ENCODE measurements at regions of chrX and their contacts with region 1.

Region 1: DNA sequence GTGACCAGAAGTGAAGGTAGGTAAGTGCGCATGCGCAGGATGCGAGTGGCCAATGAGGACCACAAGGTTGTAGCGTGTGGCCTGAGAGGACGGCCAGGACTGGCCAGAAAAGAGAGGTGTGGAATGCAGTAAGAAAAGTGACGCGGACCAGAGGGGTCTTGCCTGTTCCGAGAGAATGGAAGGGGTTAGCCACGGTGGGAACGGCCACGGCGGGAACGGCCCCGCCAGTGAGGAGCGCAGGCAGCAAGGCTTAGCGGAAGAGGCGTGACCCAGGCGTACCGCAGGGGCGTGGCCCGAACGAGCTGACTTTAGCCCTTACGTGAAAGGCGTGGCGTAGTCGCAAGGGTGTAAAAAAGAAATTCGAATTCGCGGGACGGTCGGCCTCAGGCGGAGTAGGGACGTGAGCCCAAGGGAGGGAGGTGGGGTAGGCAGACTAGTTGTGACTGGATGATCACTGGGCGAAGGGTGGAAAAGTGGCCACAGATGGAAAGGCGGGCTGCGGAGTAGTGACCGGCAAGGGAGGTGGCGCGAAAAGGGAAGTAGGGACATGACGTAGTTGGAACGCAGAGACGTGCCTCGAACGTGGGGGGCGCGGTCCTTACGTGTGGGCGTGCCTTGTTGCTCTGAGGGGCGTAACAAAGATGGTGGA is 10.4 kb upstream of the CLTRN start:
- DNase-seq: peak; percentile 75
- ATAC-seq: peak; percentile 83
- H3K4me3 Mint-ChIP-seq: no peak overlapping the region
- H3K27ac Mint-ChIP-seq: no peak overlapping the region
- H3K4me1 Mint-ChIP-seq: peaks cover 13% of the 10 kb centered on the region
- H3K27me3 Mint-ChIP-seq: no peaks in the 10 kb centered on the region
- CTCF ChIP-seq: no peak

Region 2: DNA sequence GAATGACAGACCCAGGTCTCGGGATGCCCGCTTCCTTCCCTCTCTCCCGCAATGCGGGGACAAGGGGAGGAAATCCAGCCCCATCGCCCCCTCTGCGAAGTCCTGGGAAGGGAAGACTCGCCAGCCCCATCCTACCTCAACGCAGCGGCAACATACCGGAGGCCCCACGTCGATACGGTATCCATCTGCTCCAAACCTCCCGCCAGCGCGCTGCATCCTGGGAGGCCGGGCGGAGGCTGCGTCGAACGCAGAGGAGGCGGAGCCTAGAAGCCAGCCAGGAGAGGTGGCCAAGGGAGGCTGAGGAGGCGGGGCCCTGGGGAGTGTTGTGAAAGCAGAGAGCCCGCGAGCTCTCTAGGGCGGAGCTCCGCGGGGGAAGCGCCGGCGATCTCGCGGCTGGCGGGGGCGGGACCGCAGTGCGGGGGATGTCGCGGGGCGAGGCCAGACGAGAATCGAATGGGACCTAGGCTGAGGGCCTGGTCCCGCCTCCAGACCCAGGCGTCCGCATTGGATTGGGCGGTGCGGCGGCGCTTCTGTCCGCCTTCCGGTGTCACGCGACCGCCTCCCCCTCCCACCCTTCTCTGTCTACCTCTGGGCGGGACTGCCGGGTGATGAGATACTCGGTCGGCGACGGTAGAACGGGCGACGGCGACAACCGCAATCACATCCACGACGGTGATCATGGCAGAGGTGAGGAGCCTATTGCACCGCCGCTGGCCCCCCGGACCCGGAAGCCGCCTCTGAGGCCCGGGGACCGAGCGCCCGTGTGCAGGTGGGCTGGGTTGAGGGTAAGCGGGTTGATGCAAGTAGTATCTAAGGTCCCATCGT is 801.9 kb before region 1 on chrX and contains the starts of genes FANCB and MOSPD2:
- CTCF ChIA-PET with region 1: no interaction called
- POLR2A ChIA-PET with region 1: no interaction called
- intact Hi-C with region 1: loop called (anchors 2 kb)
- DNase-seq: peak; percentile 82
- ATAC-seq: peak; percentile 93
- H3K4me3 Mint-ChIP-seq: peak within 1 kb of the TSS; percentile 87
- H3K27ac Mint-ChIP-seq: peak within 1 kb of the TSS; percentile 83
- H3K4me1 Mint-ChIP-seq: peaks cover 7% of the 10 kb centered on the region
- H3K27me3 Mint-ChIP-seq: no peaks in the 10 kb centered on the region
- CTCF ChIP-seq: no peak
- total RNA-seq, gene FANCB: 3.9 and 4.0 TPM in 2 replicates
- total RNA-seq, gene MOSPD2: 15.6 and 19.7 TPM in 2 replicates

Region 3: GRCh38 chrX:15493118-15493962 is 181.6 kb before region 1 on chrX and contains the start of gene PIR:
- CTCF ChIA-PET with region 1: no interaction called
- POLR2A ChIA-PET with region 1: no interaction called
- intact Hi-C with region 1: loop called (anchors 10 kb)
- DNase-seq: peak; percentile 19
- ATAC-seq: peak; percentile 84
- H3K4me3 Mint-ChIP-seq: peak within 1 kb of the TSS; percentile 83
- H3K27ac Mint-ChIP-seq: peak within 1 kb of the TSS; percentile 25
- H3K4me1 Mint-ChIP-seq: peaks cover 8% of the 10 kb centered on the region
- H3K27me3 Mint-ChIP-seq: peaks cover 5% of the 10 kb centered on the region
- CTCF ChIP-seq: no peak
- total RNA-seq, gene PIR: 0.82 and 1.7 TPM in 2 replicates

Region 4: GRCh38 chrX:15645258-15645657 is 29.7 kb before region 1 on chrX:
- CTCF ChIA-PET with region 1: no interaction called
- POLR2A ChIA-PET with region 1: no interaction called
- intact Hi-C with region 1: no loop called
- DNase-seq: no peak
- ATAC-seq: no peak
- H3K4me3 Mint-ChIP-seq: no peak overlapping the region
- H3K27ac Mint-ChIP-seq: no peak overlapping the region
- H3K4me1 Mint-ChIP-seq: no peaks in the 10 kb centered on the region
- H3K27me3 Mint-ChIP-seq: no peaks in the 10 kb centered on the region
- CTCF ChIP-seq: no peak

Region 5: DNA sequence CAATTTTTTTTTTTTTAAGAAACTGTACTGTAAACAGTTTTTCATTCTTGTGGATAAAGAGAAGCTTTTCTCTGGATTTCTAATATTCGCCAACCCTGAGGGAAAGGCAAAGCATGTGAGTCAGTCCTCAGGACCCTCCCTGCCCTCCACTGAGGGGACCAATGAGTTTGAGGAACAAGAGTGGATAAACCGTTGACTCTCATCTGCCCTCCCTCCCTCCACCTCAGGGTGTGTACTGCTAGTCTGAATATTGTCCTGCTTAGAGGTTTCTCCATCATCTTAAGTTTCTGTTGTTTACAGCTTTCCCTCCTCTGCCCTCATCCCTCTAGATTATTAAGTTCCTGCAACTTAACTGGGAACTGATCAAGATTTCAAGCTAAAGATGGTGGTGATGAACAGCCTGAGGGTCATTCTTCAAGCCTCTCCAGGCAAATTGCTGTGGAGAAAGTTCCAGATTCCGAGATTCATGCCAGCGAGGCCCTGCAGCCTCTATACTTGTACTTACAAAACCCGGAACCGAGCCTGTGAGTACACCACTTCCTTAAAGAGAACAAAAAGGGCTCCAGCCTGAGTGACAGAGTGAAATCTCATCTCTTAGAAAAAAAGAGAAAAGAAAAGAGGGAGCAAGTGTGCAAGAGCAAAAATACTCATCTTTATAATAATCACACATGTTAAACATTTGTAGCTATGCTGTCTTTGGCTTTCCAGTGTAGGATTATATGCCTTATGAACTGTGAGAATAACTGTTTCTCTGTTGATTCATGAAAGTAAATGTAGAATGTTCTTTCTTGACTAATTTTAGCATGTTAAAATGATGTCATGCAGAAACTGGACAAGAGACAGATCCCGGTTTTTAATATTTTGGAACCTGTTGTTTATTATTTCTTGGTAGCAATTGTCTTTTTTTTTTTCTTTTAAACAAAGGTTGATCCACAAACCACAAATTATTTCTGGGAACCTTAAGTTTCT is 75.0 kb after region 1 on chrX:
- CTCF ChIA-PET with region 1: no interaction called
- POLR2A ChIA-PET with region 1: interaction called, 9 read pairs
- intact Hi-C with region 1: loop called (anchors 1 kb)
- DNase-seq: no peak
- ATAC-seq: peak; percentile 78
- H3K4me3 Mint-ChIP-seq: peak overlapping the region; percentile 58
- H3K27ac Mint-ChIP-seq: peak overlapping the region; percentile 98
- H3K4me1 Mint-ChIP-seq: peaks cover 58% of the 10 kb centered on the region
- H3K27me3 Mint-ChIP-seq: no peaks in the 10 kb centered on the region
- CTCF ChIP-seq: no peak

Region 6: DNA sequence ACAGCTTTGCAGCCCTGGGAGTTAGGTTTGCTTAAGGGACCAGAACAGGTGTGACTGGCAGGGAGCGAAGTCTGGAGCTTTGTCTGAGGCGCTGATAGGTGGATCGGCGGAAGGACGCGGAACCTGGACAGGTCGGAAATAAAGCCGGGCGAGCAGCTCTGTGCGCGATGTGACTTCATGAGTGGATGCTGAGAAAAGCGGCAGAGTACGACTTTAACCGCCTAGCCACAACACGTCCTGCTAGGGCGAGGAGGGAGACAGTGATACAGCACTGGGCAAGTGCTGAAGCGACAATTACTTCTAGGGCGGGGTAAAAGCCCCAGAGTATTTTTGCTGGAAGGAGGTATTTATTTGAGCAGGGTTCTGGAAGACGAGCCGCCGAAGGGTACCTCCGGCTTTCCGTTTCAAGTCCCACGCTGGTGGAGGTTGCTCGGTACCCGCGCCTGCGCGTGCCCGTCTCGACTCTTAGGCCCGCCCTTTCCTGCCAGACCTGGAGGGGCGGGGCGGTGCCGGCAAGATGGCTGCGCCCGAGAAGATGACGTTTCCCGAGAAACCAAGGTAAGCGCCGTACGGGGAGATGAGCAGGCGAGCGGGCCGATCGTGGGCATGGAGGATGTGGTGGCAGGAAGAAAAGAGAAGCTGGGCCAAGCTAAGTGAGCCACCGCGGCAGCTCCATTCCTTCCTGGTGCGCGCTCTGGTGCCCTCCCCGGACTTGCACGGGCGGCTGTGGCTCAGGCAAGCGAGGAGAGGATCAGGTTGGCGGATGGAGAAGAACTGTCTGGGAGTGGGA is 115.2 kb after region 1 on chrX and contains the start of gene ZRSR2:
- CTCF ChIA-PET with region 1: interaction called, 3 read pairs
- POLR2A ChIA-PET with region 1: interaction called, 6 read pairs
- intact Hi-C with region 1: loop called (anchors 1 kb)
- DNase-seq: peak; percentile 76
- ATAC-seq: peak; percentile 93
- H3K4me3 Mint-ChIP-seq: no peak within 1 kb of the TSS
- H3K27ac Mint-ChIP-seq: peak within 1 kb of the TSS; percentile 35
- H3K4me1 Mint-ChIP-seq: peaks cover 18% of the 10 kb centered on the region
- H3K27me3 Mint-ChIP-seq: no peaks in the 10 kb centered on the region
- CTCF ChIP-seq: no peak
- total RNA-seq, gene ZRSR2: 19.8 and 20.9 TPM in 2 replicates

Region 7: DNA sequence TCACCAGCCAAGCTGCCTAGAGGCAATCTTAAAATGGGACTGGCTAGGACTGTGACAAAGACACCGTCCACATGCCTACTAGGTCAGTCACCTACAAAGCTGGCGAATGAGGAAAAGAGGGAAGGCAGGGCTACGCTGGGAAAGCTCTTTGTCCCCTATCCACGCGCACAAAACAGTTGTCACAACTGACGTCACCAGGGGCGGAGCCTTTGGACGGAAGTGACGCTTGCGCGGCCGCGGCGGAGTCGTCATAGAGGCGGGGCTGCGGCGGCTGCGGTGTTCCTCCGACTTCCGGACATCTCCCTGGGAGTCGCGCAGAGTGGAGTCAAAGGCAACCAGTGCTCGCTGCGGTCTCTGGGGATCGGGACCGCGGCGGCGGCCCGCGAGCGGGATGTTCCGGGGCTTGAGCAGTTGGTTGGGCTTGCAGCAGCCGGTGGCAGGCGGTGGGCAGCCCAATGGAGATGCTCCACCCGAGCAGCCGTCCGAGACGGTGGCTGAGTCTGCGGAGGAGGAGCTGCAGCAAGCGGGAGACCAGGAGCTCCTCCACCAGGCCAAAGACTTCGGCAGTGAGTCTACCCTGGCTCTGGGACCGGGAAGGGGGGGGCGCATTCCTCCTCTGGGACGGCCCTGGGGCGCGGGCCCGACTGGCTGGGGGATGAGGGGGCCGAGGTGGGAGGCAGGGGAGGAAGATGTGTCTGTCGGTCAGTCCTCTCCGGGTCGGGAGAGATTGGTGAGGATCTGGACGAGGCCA is 1044.5 kb after region 1 on chrX and contains the start of gene SYAP1:
- CTCF ChIA-PET with region 1: no interaction called
- POLR2A ChIA-PET with region 1: interaction called, 6 read pairs
- intact Hi-C with region 1: loop called (anchors 2 kb)
- DNase-seq: peak; percentile 87
- ATAC-seq: peak; percentile 93
- H3K4me3 Mint-ChIP-seq: peak within 1 kb of the TSS; percentile 90
- H3K27ac Mint-ChIP-seq: peak within 1 kb of the TSS; percentile 94
- H3K4me1 Mint-ChIP-seq: peaks cover 15% of the 10 kb centered on the region
- H3K27me3 Mint-ChIP-seq: no peaks in the 10 kb centered on the region
- CTCF ChIP-seq: no peak
- total RNA-seq, gene SYAP1: 14.9 and 16.8 TPM in 2 replicates

Region 8: DNA sequence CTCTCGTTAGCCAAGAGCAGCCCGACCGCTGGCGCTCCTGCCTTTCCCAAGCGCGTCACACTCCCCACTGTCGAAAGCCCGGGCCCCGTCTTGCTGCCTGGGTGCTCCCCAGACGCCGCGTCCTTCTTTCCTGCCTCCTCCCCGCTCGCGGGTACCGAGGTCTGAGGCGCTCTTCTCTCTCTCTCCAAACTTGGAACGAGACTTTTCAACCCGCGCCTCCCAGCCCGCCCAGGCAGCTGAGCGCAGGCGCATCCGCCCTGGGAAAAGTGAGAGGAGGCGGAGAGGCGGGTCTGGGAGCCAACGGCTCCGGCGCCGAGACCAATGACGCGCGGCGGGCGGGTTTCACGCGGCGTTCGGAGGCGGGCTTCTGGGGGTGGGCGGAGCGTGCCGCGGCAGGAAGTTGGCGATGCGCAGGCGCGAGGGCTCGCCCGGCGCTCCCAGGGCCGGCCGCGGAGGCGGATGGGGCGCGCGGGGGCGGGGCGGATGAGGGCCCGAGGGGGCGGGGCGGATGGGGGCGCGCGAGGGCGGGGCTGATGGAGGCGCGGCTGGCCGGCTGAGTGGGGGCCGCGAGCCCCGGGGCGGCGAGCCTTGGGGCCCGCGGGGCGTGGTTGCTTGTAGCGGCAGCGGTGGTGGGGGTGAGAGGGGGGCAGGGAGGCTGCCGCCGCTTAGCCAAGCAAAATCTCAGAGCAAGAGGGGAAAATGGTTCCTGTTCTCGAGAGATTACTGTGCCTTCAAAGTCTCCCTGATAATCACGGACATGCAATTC is 1195.3 kb after region 1 on chrX and contains the start of gene RBBP7:
- CTCF ChIA-PET with region 1: no interaction called
- POLR2A ChIA-PET with region 1: no interaction called
- intact Hi-C with region 1: loop called (anchors 10 kb)
- DNase-seq: peak; percentile 85
- ATAC-seq: peak; percentile 81
- H3K4me3 Mint-ChIP-seq: peak within 1 kb of the TSS; percentile 91
- H3K27ac Mint-ChIP-seq: peak within 1 kb of the TSS; percentile 94
- H3K4me1 Mint-ChIP-seq: peaks cover 49% of the 10 kb centered on the region
- H3K27me3 Mint-ChIP-seq: no peaks in the 10 kb centered on the region
- CTCF ChIP-seq: no peak
- total RNA-seq, gene RBBP7: 97.9 and 103 TPM in 2 replicates

Measured in activated B cell treated with CpG ODN at 0.5 μM for 24 hours (primary cell).